ENCODE measurements at regions of chr4 and their contacts with region 1.

Region 1: GRCh38 chr4:83267121-83267829 is 17.3 kb downstream of the COQ2 start:
- DNase-seq: no peak
- H3K4me3 ChIP-seq: no peak overlapping the region
- H3K27ac ChIP-seq: no peak overlapping the region
- H3K4me1 ChIP-seq: peaks cover 0 to 8% (median 5%) of the 10 kb centered on the region in 4 donors
- H3K27me3 ChIP-seq: no peaks in the 10 kb centered on the region
- CTCF ChIP-seq: no peak
- EP300 ChIP-seq: no peak
- POLR2A ChIP-seq: no peak

Region 2: GRCh38 chr4:82739316-82740179 is 527.7 kb before region 1 on chr4:
- in situ Hi-C with region 1: no loop called
- intact Hi-C with region 1: no loop called
- DNase-seq: peak; percentile 81
- H3K4me3 ChIP-seq: no peak overlapping the region
- H3K27ac ChIP-seq: no peak overlapping the region
- H3K4me1 ChIP-seq: no peaks in the 10 kb centered on the region
- H3K27me3 ChIP-seq: no peaks in the 10 kb centered on the region
- CTCF ChIP-seq: peak; percentile 78 to 99 (median 95)
- EP300 ChIP-seq: no peak
- POLR2A ChIP-seq: no peak

Region 3: GRCh38 chr4:83067058-83067639 is 200.1 kb before region 1 on chr4:
- in situ Hi-C with region 1: loop called in 1 of 4 experiments (anchors 10 kb)
- intact Hi-C with region 1: loop called (anchors 10 kb)
- DNase-seq: no peak
- H3K4me3 ChIP-seq: no peak overlapping the region
- H3K27ac ChIP-seq: no peak overlapping the region
- H3K4me1 ChIP-seq: peaks cover 0 to 13% (median 4%) of the 10 kb centered on the region in 4 donors
- H3K27me3 ChIP-seq: no peaks in the 10 kb centered on the region
- CTCF ChIP-seq: no peak
- EP300 ChIP-seq: no peak
- POLR2A ChIP-seq: no peak

Region 4: GRCh38 chr4:83074086-83074704 is 193.1 kb before region 1 on chr4:
- in situ Hi-C with region 1: loop called in 2 of 4 experiments (anchors 10 to 25 kb)
- intact Hi-C with region 1: loop called (anchors 10 kb)
- DNase-seq: peak; percentile 30
- H3K4me3 ChIP-seq: no peak overlapping the region
- H3K27ac ChIP-seq: peak overlapping the region in 1 of 4 donors; percentile 66
- H3K4me1 ChIP-seq: peaks cover 0 to 32% (median 4%) of the 10 kb centered on the region in 4 donors
- H3K27me3 ChIP-seq: no peaks in the 10 kb centered on the region
- CTCF ChIP-seq: peak; percentile 66 to 85 (median 75)
- EP300 ChIP-seq: no peak
- POLR2A ChIP-seq: no peak

Measured in transverse colon (tissue), 4 donors.